B cell (primary cell): ENCODE measurements at regions of chr15 and their contacts with region 1.

Region 1: DNA sequence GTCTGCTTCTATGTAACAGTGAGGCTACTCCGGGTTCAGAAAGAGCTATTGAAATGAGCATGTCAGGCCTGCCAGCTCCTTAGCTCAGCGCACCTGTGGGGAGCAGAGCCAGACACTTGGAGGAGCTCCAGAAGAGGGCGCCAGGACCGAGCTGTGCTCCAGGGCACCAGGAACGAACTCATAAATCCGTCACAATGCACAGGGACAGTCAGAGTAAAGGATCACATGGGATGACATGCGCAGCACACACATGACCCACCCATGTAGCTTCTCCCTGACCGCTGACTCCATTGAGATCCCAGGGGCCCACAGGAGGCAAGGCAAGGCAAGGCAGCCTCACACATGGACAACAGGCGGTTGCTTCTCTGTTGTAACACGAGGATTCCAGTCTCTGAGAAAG is 26.0 kb upstream of the GNB5 start:
- DNase-seq: peak; percentile 52
- ATAC-seq: peak; percentile 58
- H3K4me3 ChIP-seq: no peak overlapping the region
- H3K4me3 Mint-ChIP-seq: no peak overlapping the region
- H3K27ac ChIP-seq: no peak overlapping the region
- H3K27ac Mint-ChIP-seq: peak overlapping the region; percentile 47
- H3K4me1 ChIP-seq: peaks cover 19 to 21% of the 10 kb centered on the region in 2 donors
- H3K4me1 Mint-ChIP-seq: peaks cover 32% of the 10 kb centered on the region
- H3K27me3 ChIP-seq: no peaks in the 10 kb centered on the region
- H3K27me3 Mint-ChIP-seq: no peaks in the 10 kb centered on the region
- CTCF ChIP-seq: peak; percentile 45

Region 2: DNA sequence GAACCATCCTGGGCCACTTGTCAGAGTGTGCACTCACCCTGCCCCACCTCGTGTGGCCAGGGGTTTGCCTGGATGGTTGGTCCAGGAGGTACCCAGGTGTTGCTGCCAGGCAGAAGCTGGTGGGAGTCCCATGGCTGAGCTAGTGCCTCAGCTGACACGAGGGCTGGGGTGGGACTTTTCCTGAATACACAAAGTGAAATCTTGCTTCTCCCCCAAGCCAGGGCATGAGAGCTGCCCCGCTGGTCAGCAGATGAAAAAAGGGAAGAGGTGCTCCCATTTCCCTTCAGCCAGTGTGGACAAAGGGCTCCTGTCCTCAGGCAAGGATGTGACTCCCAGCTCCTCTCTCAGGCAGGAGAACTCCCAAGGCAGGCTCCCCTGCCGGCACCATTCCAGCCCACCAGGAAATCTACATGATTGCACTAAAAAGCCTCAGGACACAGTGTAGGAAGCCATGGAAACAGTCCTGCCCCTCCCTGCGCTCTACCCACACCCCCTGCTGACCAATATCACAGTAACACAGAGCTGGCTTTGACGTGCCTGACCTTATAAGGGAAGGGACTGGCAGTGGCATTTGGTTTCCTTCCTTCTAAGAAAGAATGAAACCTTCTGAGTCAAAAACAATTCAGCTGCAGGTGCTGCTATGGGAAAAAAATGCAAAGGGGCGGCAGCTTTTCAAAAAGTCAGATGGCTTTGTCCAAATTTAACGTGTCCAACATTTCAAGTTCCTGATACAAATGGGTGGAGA is 44.5 kb after region 1 on chr15:
- CTCF ChIA-PET with region 1: interaction called, 512 read pairs
- POLR2A ChIA-PET with region 1: no interaction called
- intact Hi-C with region 1: no loop called
- DNase-seq: peak; percentile 74
- ATAC-seq: peak; percentile 100
- H3K4me3 ChIP-seq: peak overlapping the region in 2 of 5 experiments; percentile 17 to 29
- H3K4me3 Mint-ChIP-seq: peak overlapping the region; percentile 69
- H3K27ac ChIP-seq: peak overlapping the region; percentile 59 to 64
- H3K27ac Mint-ChIP-seq: peak overlapping the region; percentile 91
- H3K4me1 ChIP-seq: peaks cover 24 to 28% of the 10 kb centered on the region in 2 donors
- H3K4me1 Mint-ChIP-seq: peaks cover 32% of the 10 kb centered on the region
- H3K27me3 ChIP-seq: no peaks in the 10 kb centered on the region
- H3K27me3 Mint-ChIP-seq: no peaks in the 10 kb centered on the region
- CTCF ChIP-seq: peak; percentile 33

Region 3: DNA sequence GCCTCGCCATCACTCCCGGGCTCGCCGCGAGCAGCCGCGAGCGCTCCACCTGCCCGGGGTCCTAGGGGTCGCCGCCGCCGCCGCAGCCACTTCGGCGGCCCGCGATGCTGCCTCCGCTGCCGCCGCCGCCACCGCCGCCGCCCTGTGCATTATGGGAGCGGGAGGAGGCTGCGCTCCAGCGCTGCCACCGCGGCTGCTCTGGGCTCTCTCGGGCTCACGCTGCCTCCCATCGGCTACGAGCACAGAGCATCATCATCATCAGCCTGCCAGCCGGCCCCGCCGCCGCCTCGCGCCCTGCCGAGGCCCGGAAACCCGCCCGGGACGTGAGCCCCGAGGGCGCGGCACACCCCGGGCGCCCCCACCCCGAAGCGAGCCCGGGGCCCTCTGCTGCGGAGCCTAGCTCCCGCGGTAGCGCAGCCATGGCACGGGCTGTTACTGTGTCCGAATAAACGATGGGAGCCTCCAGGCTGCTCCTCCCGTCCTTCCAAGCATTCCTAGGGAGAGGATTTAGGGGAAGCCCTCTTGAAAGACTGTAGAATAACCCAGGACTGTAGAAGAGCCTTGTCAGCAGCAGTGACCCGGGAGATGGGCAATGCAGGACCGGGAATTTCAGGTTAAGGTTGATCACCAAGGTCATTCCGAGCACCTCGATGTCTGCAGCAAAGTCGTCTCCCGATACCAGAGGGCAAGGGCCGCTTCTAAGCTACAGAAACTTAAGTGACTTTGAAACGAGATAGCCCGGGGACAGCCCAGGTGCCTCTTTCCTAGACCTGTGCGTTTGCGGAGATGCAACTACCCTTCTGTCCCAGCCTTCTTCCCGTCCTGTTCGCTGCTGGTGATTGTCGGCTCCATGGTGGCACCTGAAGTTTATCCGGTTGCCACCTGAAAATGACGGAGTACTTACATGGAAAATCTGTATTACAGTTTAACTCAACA is 312.1 kb after region 1 on chr15:
- CTCF ChIA-PET with region 1: no interaction called
- POLR2A ChIA-PET with region 1: no interaction called
- intact Hi-C with region 1: no loop called
- DNase-seq: peak; percentile 92
- ATAC-seq: peak; percentile 79
- H3K4me3 ChIP-seq: peak overlapping the region; percentile 51 to 80 (median 71)
- H3K4me3 Mint-ChIP-seq: peak overlapping the region; percentile 81
- H3K27ac ChIP-seq: peak overlapping the region; percentile 73 to 90
- H3K27ac Mint-ChIP-seq: peak overlapping the region; percentile 92
- H3K4me1 ChIP-seq: peaks cover 11 to 18% of the 10 kb centered on the region in 2 donors
- H3K4me1 Mint-ChIP-seq: peaks cover 27% of the 10 kb centered on the region
- H3K27me3 ChIP-seq: no peaks in the 10 kb centered on the region
- H3K27me3 Mint-ChIP-seq: no peaks in the 10 kb centered on the region
- CTCF ChIP-seq: no peak

Region 4: GRCh38 chr15:52546031-52546751 is 329.0 kb after region 1 on chr15:
- CTCF ChIA-PET with region 1: no interaction called
- POLR2A ChIA-PET with region 1: no interaction called
- intact Hi-C with region 1: no loop called
- DNase-seq: no peak
- ATAC-seq: no peak
- H3K4me3 ChIP-seq: no peak overlapping the region
- H3K4me3 Mint-ChIP-seq: no peak overlapping the region
- H3K27ac ChIP-seq: no peak overlapping the region
- H3K27ac Mint-ChIP-seq: no peak overlapping the region
- H3K4me1 ChIP-seq: no peaks in the 10 kb centered on the region
- H3K4me1 Mint-ChIP-seq: no peaks in the 10 kb centered on the region
- H3K27me3 ChIP-seq: no peaks in the 10 kb centered on the region
- H3K27me3 Mint-ChIP-seq: no peaks in the 10 kb centered on the region
- CTCF ChIP-seq: no peak